ENCODE measurements at regions of chr6 and their contacts with region 1.

Region 1: GRCh38 chr6:111764238-111765175 is 108.7 kb downstream of the FYN start:
- DNase-seq: peak in 10 of 14 experiments; percentile 25 to 87 (median 44)
- ATAC-seq: peak; percentile 24
- H3K4me3 ChIP-seq: peak overlapping the region; percentile 19
- H3K4me3 Mint-ChIP-seq: peak overlapping the region; percentile 83
- H3K27ac ChIP-seq: peak overlapping the region; percentile 70 to 71
- H3K27ac Mint-ChIP-seq: peak overlapping the region; percentile 99
- H3K4me1 ChIP-seq: peaks cover 89% of the 10 kb centered on the region
- H3K4me1 Mint-ChIP-seq: peaks cover 99% of the 10 kb centered on the region
- H3K27me3 ChIP-seq: no peaks in the 10 kb centered on the region
- H3K27me3 Mint-ChIP-seq: no peaks in the 10 kb centered on the region
- CTCF ChIP-seq: no peak

Region 2: DNA sequence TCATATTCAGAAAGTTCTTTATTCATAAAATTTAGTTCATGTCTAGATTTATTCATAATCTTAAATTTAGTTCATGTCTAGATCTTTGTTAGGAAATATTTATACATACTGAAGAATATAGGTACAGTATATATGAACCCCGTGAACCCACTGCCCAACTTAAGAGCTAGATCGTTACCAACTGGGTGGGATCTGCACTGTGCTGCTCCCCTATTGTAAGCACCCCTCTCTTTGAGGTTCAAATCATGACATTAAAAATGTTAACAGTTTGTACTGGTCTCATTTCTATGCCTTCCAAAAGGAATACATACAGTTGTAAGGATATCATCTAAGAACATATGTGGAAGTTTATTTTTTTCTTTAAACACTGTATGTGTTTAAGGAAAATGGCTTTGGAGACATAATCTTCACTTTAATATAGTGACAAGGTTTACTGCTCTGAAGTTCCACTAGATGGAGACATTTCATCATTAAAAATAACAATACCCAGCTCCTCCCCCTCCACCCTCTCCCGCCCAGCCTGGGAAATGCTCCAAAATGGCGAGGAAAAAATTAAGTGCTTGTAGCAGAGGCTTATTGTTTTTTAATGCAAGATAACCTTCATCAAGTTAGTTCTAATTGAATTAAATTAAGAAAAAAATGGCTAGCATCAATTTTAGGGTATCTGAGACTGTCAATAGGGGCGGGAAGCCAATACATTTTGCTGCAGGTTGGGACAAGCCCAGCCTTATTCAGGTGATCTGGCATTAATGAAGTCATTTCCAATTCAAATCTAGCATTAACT is 54.7 kb before region 1 on chr6:
- CTCF ChIA-PET with region 1: interaction called, 7 read pairs
- POLR2A ChIA-PET with region 1: interaction called, 5 read pairs
- intact Hi-C with region 1: loop called in 1 of 2 experiments (anchors 2 kb)
- DNase-seq: peak; percentile 21 to 85 (median 52)
- ATAC-seq: peak; percentile 80
- H3K4me3 ChIP-seq: no peak overlapping the region
- H3K4me3 Mint-ChIP-seq: peak overlapping the region; percentile 67
- H3K27ac ChIP-seq: no peak overlapping the region
- H3K27ac Mint-ChIP-seq: peak overlapping the region; percentile 93
- H3K4me1 ChIP-seq: peaks cover 41% of the 10 kb centered on the region
- H3K4me1 Mint-ChIP-seq: peaks cover 64% of the 10 kb centered on the region
- H3K27me3 ChIP-seq: no peaks in the 10 kb centered on the region
- H3K27me3 Mint-ChIP-seq: no peaks in the 10 kb centered on the region
- CTCF ChIP-seq: peak; percentile 80

Region 3: GRCh38 chr6:111750753-111751684 is 13.5 kb before region 1 on chr6:
- CTCF ChIA-PET with region 1: interaction called, 5 read pairs
- POLR2A ChIA-PET with region 1: interaction called, 48 read pairs
- intact Hi-C with region 1: loop called in 1 of 2 experiments (anchors 1 kb)
- DNase-seq: peak; percentile 35 to 93 (median 52)
- ATAC-seq: peak; percentile 78
- H3K4me3 ChIP-seq: peak overlapping the region; percentile 14
- H3K4me3 Mint-ChIP-seq: peak overlapping the region; percentile 65
- H3K27ac ChIP-seq: peak overlapping the region; percentile 77 to 93
- H3K27ac Mint-ChIP-seq: peak overlapping the region; percentile 99
- H3K4me1 ChIP-seq: peaks cover 69% of the 10 kb centered on the region
- H3K4me1 Mint-ChIP-seq: peaks cover 98% of the 10 kb centered on the region
- H3K27me3 ChIP-seq: no peaks in the 10 kb centered on the region
- H3K27me3 Mint-ChIP-seq: no peaks in the 10 kb centered on the region
- CTCF ChIP-seq: no peak

Region 4: GRCh38 chr6:111793711-111794111 is 29.2 kb after region 1 on chr6:
- CTCF ChIA-PET with region 1: interaction called, 3 read pairs
- POLR2A ChIA-PET with region 1: interaction called, 5 read pairs
- intact Hi-C with region 1: loop called in 1 of 2 experiments (anchors 2 kb)
- DNase-seq: peak in 8 of 14 experiments; percentile 26 to 88 (median 48)
- ATAC-seq: peak; percentile 63
- H3K4me3 ChIP-seq: peak overlapping the region; percentile 39
- H3K4me3 Mint-ChIP-seq: peak overlapping the region; percentile 79
- H3K27ac ChIP-seq: peak overlapping the region; percentile 5 to 61
- H3K27ac Mint-ChIP-seq: peak overlapping the region; percentile 78
- H3K4me1 ChIP-seq: peaks cover 57% of the 10 kb centered on the region
- H3K4me1 Mint-ChIP-seq: peaks cover 77% of the 10 kb centered on the region
- H3K27me3 ChIP-seq: no peaks in the 10 kb centered on the region
- H3K27me3 Mint-ChIP-seq: no peaks in the 10 kb centered on the region
- CTCF ChIP-seq: no peak

Region 5: DNA sequence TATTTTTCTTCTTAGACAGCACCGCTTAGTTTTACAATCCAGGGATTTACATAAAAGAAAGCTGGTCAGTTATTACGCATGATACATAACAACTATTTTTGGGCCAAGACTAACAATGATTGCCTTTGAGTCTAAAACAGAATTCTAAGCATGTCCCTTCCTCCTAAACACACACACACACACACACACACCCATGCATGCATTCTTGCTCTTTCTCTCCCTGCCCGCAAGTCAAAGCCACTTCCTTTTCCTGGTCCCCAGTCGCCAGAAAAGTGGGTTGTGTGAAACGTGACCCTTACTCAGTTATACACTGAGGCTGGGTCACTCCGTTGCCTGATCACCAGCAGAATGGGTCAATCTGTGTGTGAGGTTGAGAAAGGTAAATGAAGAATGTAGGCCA is 77.3 kb after region 1 on chr6:
- CTCF ChIA-PET with region 1: interaction called, 3 read pairs
- POLR2A ChIA-PET with region 1: interaction called, 17 read pairs
- intact Hi-C with region 1: no loop called
- DNase-seq: peak in 7 of 14 experiments; percentile 35 to 87 (median 63)
- ATAC-seq: peak; percentile 3
- H3K4me3 ChIP-seq: peak overlapping the region; percentile 0
- H3K4me3 Mint-ChIP-seq: no peak overlapping the region
- H3K27ac ChIP-seq: peak overlapping the region; percentile 54 to 67
- H3K27ac Mint-ChIP-seq: no peak overlapping the region
- H3K4me1 ChIP-seq: peaks cover 92% of the 10 kb centered on the region
- H3K4me1 Mint-ChIP-seq: no peaks in the 10 kb centered on the region
- H3K27me3 ChIP-seq: no peaks in the 10 kb centered on the region
- H3K27me3 Mint-ChIP-seq: no peaks in the 10 kb centered on the region
- CTCF ChIP-seq: no peak

Region 6: DNA sequence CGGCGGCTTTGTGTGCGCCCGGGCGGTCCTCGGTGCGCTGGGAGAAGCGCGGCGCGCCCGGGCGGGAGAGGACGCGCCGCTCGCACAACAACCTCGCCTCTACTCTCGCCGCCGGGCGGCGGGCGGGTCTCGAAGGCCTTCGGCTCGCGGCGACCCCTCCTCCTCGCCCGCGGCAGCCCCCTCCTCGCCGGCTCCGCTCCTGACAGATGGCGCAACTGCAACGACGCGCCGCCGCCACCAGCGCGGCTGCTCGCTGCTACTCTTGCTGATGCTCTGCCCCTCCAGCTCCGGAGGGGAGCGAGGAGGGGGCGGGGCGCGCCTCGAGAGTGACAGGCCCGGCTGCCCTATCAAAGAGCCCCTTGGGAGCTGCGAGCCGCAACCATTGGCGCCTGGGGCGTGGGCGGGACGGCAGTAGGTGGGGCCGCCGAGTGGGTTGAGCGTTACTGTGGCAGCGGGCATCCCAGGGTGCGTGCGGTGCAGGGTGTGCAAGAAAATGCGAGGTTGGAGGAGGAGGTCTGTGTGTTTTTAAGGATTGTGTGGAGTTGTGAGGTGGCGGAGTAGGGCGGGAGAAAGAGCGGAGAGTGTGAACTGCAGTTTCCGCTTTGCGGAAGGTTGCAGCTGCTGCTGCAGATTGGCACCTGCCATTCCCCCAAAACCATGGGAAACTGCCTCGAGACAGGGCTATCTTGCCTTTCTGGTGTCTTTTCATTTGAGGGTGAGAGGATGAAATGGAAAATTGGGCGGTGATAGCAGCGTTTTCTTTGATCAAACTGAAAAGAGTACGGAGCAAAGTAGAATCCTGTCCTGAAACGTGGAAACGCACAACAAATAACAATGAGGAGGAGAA is 108.9 kb after region 1 on chr6 and contains the start of gene FYN:
- CTCF ChIA-PET with region 1: interaction called, 3 read pairs
- POLR2A ChIA-PET with region 1: interaction called, 9 read pairs
- intact Hi-C with region 1: loop called (anchors 5 kb)
- DNase-seq: peak; percentile 97 to 99 (median 98)
- ATAC-seq: peak; percentile 86
- H3K4me3 ChIP-seq: peak within 1 kb of the TSS; percentile 86
- H3K4me3 Mint-ChIP-seq: peak within 1 kb of the TSS; percentile 97
- H3K27ac ChIP-seq: peak within 1 kb of the TSS; percentile 87 to 94
- H3K27ac Mint-ChIP-seq: peak within 1 kb of the TSS; percentile 93
- H3K4me1 ChIP-seq: peaks cover 22% of the 10 kb centered on the region
- H3K4me1 Mint-ChIP-seq: peaks cover 54% of the 10 kb centered on the region
- H3K27me3 ChIP-seq: no peaks in the 10 kb centered on the region
- H3K27me3 Mint-ChIP-seq: no peaks in the 10 kb centered on the region
- CTCF ChIP-seq: no peak
- total RNA-seq, gene FYN: 419 TPM

Region 7: GRCh38 chr6:111997078-111997852 is 232.8 kb after region 1 on chr6:
- CTCF ChIA-PET with region 1: interaction called, 6 read pairs
- POLR2A ChIA-PET with region 1: interaction called, 5 read pairs
- intact Hi-C with region 1: loop called in 1 of 2 experiments (anchors 5 kb)
- DNase-seq: peak; percentile 61 to 92 (median 76)
- ATAC-seq: peak; percentile 70
- H3K4me3 ChIP-seq: peak overlapping the region; percentile 8
- H3K4me3 Mint-ChIP-seq: peak overlapping the region; percentile 75
- H3K27ac ChIP-seq: no peak overlapping the region
- H3K27ac Mint-ChIP-seq: peak overlapping the region; percentile 82
- H3K4me1 ChIP-seq: peaks cover 40% of the 10 kb centered on the region
- H3K4me1 Mint-ChIP-seq: peaks cover 55% of the 10 kb centered on the region
- H3K27me3 ChIP-seq: no peaks in the 10 kb centered on the region
- H3K27me3 Mint-ChIP-seq: no peaks in the 10 kb centered on the region
- CTCF ChIP-seq: peak; percentile 93

Region 8: GRCh38 chr6:112100561-112100960 is 336.1 kb after region 1 on chr6:
- CTCF ChIA-PET with region 1: no interaction called
- POLR2A ChIA-PET with region 1: no interaction called
- intact Hi-C with region 1: no loop called
- DNase-seq: no peak
- ATAC-seq: no peak
- H3K4me3 ChIP-seq: no peak overlapping the region
- H3K4me3 Mint-ChIP-seq: no peak overlapping the region
- H3K27ac ChIP-seq: no peak overlapping the region
- H3K27ac Mint-ChIP-seq: no peak overlapping the region
- H3K4me1 ChIP-seq: no peaks in the 10 kb centered on the region
- H3K4me1 Mint-ChIP-seq: no peaks in the 10 kb centered on the region
- H3K27me3 ChIP-seq: no peaks in the 10 kb centered on the region
- H3K27me3 Mint-ChIP-seq: no peaks in the 10 kb centered on the region
- CTCF ChIP-seq: no peak

Region 9: DNA sequence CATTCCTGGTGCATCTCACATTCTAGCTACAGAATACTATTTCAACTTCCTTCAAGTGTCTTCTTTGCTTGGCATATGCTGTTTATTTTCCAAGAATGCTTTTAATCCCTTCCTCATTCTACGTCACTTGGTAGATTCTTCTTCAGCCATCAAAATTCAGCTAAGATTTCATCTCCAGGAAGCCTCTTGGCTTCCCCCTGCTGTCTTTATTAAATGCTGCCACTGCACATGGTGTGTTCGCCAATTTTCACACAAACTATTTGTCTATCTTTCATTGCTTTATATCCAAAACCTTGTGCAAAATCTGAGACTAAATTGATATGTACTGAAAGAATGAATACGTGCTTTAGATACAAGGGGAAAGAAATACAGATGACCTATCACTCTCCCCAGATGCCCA is 835.7 kb after region 1 on chr6:
- CTCF ChIA-PET with region 1: no interaction called
- POLR2A ChIA-PET with region 1: no interaction called
- intact Hi-C with region 1: no loop called
- DNase-seq: no peak
- ATAC-seq: no peak
- H3K4me3 ChIP-seq: no peak overlapping the region
- H3K4me3 Mint-ChIP-seq: no peak overlapping the region
- H3K27ac ChIP-seq: no peak overlapping the region
- H3K27ac Mint-ChIP-seq: no peak overlapping the region
- H3K4me1 ChIP-seq: no peaks in the 10 kb centered on the region
- H3K4me1 Mint-ChIP-seq: no peaks in the 10 kb centered on the region
- H3K27me3 ChIP-seq: no peaks in the 10 kb centered on the region
- H3K27me3 Mint-ChIP-seq: no peaks in the 10 kb centered on the region
- CTCF ChIP-seq: no peak